ENCODE measurements at regions of chr6 and their contacts with region 1.

Region 1: GRCh38 chr6:135183532-135184440 is 2.7 kb downstream of the MYB start:
- DNase-seq: peak; percentile 48
- ATAC-seq: peak; percentile 38
- H3K4me3 Mint-ChIP-seq: peak overlapping the region; percentile 87
- H3K27ac Mint-ChIP-seq: peak overlapping the region; percentile 57
- H3K4me1 Mint-ChIP-seq: peaks cover 30% of the 10 kb centered on the region
- H3K27me3 Mint-ChIP-seq: no peaks in the 10 kb centered on the region
- CTCF ChIP-seq: no peak

Region 2: DNA sequence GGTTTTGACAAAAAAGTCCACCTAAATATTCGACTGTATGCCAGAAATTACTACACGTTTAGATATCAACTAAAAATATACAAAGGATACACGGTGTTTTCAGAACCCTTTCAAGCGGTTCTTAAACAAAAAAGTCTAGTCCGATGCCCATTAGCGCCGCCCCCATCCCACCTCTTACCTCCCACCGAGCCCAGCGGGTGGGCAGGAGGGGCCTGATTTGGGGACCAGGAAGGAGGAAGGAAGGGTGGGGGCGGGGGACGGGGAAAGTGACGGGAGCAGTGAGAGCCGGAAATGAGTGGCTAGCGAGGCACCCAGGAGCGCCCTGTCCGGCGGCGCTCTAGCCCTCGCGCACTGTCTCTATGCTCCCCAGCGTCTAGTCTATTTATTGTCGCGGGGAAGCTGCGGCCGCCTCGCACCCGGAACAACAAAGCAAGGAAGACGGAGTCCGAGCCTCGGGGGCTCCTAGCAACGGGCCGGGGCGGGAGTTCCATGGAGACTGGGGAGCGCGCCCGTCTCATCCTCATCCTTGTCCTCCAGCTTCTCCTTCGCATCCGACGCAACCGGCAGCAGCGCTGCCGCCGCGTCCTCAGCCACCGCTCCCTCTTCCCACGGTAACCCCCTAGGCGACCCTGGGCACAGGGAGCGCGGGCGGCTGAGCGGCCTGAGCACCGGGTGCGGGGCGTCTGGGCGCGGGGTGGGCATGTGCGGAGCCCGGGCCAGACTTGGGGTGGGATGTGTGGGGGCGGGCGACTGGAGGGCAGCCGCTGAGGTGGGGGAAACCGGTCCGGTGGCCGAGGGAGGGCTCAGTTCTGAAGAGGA is 1230.8 kb before region 1 on chr6 and contains the start of gene TBPL1:
- CTCF ChIA-PET with region 1: no interaction called
- POLR2A ChIA-PET with region 1: no interaction called
- intact Hi-C with region 1: loop called (anchors 2 kb)
- DNase-seq: peak; percentile 83
- ATAC-seq: peak; percentile 84
- H3K4me3 Mint-ChIP-seq: peak within 1 kb of the TSS; percentile 95
- H3K27ac Mint-ChIP-seq: peak within 1 kb of the TSS; percentile 98
- H3K4me1 Mint-ChIP-seq: peaks cover 53% of the 10 kb centered on the region
- H3K27me3 Mint-ChIP-seq: no peaks in the 10 kb centered on the region
- CTCF ChIP-seq: no peak
- total RNA-seq, gene TBPL1: 33.0 and 35.7 TPM in 2 replicates

Region 3: GRCh38 chr6:134741200-134741536 is 442.6 kb before region 1 on chr6:
- CTCF ChIA-PET with region 1: no interaction called
- POLR2A ChIA-PET with region 1: no interaction called
- intact Hi-C with region 1: no loop called
- DNase-seq: no peak
- ATAC-seq: no peak
- H3K4me3 Mint-ChIP-seq: no peak overlapping the region
- H3K27ac Mint-ChIP-seq: no peak overlapping the region
- H3K4me1 Mint-ChIP-seq: no peaks in the 10 kb centered on the region
- H3K27me3 Mint-ChIP-seq: peaks cover 9% of the 10 kb centered on the region
- CTCF ChIP-seq: no peak

Region 4: DNA sequence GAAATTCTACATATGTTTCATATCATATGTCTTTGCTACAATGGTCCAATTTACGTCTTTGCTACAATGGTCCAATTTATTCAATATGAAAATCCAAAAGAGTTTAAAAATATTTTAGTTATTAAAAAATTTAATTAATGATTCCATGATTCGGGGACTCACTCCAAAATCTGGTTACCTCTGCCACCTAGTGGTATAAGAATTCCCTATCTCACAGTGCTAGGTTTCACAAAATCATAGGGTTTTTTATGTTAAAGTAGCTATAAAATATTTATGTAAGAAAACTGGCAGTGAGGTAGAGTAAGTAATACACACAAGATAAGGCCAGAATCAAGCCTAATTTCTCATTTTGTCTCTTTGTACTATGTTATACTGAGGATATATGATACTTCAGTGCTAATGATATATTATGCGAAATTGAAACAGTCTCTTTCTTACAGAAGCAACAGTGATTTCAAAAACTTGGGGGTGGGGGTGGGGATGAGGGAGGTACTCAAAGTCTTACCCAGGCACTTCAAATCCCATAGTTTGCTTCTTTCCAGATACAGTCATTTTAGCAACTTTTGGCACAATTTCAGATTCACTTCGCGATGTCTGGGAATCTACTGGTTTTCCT is 181.4 kb before region 1 on chr6:
- CTCF ChIA-PET with region 1: no interaction called
- POLR2A ChIA-PET with region 1: no interaction called
- intact Hi-C with region 1: loop called (anchors 2 kb)
- DNase-seq: no peak
- ATAC-seq: peak; percentile 37
- H3K4me3 Mint-ChIP-seq: no peak overlapping the region
- H3K27ac Mint-ChIP-seq: no peak overlapping the region
- H3K4me1 Mint-ChIP-seq: peaks cover 7% of the 10 kb centered on the region
- H3K27me3 Mint-ChIP-seq: no peaks in the 10 kb centered on the region
- CTCF ChIP-seq: no peak

Region 5: GRCh38 chr6:135145063-135145800 is 38.6 kb before region 1 on chr6:
- CTCF ChIA-PET with region 1: interaction called, 29 read pairs
- POLR2A ChIA-PET with region 1: interaction called, 13 read pairs
- intact Hi-C with region 1: loop called (anchors 1 kb)
- DNase-seq: no peak
- ATAC-seq: peak; percentile 62
- H3K4me3 Mint-ChIP-seq: peak overlapping the region; percentile 56
- H3K27ac Mint-ChIP-seq: peak overlapping the region; percentile 62
- H3K4me1 Mint-ChIP-seq: peaks cover 46% of the 10 kb centered on the region
- H3K27me3 Mint-ChIP-seq: no peaks in the 10 kb centered on the region
- CTCF ChIP-seq: no peak

Region 6: DNA sequence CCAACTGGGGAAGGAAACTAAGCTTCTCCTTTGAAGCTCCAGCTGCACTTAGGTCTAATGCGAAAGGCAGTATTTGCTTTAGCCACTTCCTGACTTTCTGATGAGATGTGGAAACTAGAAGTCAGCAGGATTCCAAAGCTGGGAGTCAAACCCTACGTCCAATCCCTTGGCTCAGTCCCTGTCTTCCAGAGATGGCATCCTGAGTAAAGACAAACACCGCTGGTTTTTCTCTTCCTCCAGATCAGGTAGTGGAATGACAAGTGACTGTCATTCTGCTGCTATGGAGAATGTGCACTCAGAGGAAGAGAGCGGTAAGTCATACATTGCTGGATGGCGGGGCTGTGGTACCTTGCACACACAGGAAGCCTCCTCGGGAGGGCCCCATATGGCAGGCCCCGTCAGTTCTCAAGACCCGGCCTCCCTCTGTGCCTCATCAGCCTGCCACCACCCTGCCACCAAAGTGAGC is 68.2 kb after region 1 on chr6:
- CTCF ChIA-PET with region 1: no interaction called
- POLR2A ChIA-PET with region 1: no interaction called
- intact Hi-C with region 1: no loop called
- DNase-seq: no peak
- ATAC-seq: no peak
- H3K4me3 Mint-ChIP-seq: no peak overlapping the region
- H3K27ac Mint-ChIP-seq: no peak overlapping the region
- H3K4me1 Mint-ChIP-seq: peaks cover 19% of the 10 kb centered on the region
- H3K27me3 Mint-ChIP-seq: no peaks in the 10 kb centered on the region
- CTCF ChIP-seq: no peak

Region 7: DNA sequence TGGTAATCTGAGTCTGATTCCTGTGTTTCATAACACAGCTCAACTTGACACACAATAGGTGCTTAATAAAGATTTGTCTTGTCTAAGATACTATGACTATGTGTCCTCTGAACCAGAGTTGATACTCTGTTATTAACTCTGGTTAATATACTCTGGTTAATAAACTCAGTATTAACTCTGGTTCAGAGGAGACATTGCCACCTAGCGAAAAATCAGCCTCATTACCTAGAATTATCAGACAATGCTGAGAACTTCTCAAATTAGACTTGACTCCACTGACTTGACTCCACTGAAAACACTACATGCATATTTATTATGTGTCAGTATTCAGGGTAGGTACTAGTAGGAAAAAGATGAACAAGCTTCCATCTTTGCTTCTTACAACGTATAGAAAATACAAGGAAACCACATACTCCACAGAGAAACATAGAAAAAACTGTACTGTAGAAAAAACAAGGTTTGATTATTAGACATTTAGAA is 239.9 kb after region 1 on chr6:
- CTCF ChIA-PET with region 1: interaction called, 3 read pairs
- POLR2A ChIA-PET with region 1: no interaction called
- intact Hi-C with region 1: loop called (anchors 1 kb)
- DNase-seq: no peak
- ATAC-seq: peak; percentile 60
- H3K4me3 Mint-ChIP-seq: no peak overlapping the region
- H3K27ac Mint-ChIP-seq: no peak overlapping the region
- H3K4me1 Mint-ChIP-seq: no peaks in the 10 kb centered on the region
- H3K27me3 Mint-ChIP-seq: no peaks in the 10 kb centered on the region
- CTCF ChIP-seq: no peak

Region 8: DNA sequence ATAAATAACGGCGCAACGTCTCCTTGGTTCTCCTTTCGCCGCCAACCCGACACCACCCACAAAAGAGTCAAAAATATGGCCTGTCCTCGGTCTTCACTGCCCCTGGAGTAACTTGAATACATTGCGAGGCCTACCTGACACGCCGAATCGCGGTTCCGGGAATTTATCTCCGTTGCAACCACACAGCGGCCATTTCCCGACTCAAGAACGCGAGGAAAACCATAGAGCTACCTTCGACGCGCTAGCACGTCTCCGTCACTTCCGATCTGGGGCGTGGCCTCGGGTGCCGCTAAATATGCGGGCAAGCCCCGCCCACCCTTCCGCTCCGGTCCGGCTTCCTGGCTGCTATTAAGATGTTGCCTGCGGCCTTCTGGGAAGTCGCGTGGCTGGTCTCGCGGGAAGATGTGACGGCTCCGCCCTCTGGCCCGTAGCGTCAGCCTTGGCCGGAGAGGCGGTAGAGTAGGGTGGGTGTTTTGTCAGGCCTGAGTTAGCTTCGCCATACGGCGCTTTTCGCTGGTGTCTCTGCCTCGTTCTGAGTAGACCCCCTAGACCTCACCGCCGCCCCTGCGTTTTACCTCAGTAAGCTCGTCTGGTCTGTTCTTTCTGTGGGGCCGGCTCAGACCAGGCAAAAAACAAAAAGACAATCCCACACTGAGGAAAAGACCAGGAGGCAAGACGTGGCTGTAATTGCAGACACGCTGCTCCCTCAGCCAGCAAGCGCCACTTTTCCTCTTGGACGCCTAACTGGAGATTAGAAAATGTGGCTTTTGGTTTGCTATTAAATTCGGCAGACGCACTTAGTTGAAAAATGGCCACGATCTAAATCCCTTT is 1106.0 kb after region 1 on chr6 and contains the start of gene BCLAF1:
- CTCF ChIA-PET with region 1: no interaction called
- POLR2A ChIA-PET with region 1: interaction called, 5 read pairs
- intact Hi-C with region 1: loop called (anchors 1 kb)
- DNase-seq: peak; percentile 98
- ATAC-seq: peak; percentile 80
- H3K4me3 Mint-ChIP-seq: peak within 1 kb of the TSS; percentile 100
- H3K27ac Mint-ChIP-seq: peak within 1 kb of the TSS; percentile 100
- H3K4me1 Mint-ChIP-seq: peaks cover 49% of the 10 kb centered on the region
- H3K27me3 Mint-ChIP-seq: no peaks in the 10 kb centered on the region
- CTCF ChIP-seq: no peak
- total RNA-seq, gene BCLAF1: 253 and 259 TPM in 2 replicates